ENCODE measurements at regions of chr1 and their contacts with region 1.

Region 1: GRCh38 chr1:40862008-40862863 is at the start of gene CITED4:
- DNase-seq: peak; percentile 95
- H3K4me3 ChIP-seq: peak within 1 kb of the TSS; percentile 57 to 79
- H3K4me3 Mint-ChIP-seq: peak within 1 kb of the TSS; percentile 94 to 99 (median 98)
- H3K27ac ChIP-seq: peak within 1 kb of the TSS; percentile 63
- H3K27ac Mint-ChIP-seq: peak within 1 kb of the TSS; percentile 89 to 99 (median 98)
- H3K4me1 ChIP-seq: peaks cover 14% of the 10 kb centered on the region
- H3K4me1 Mint-ChIP-seq: peaks cover 7 to 15% (median 10%) of the 10 kb centered on the region in 4 donors
- H3K27me3 ChIP-seq: no peaks in the 10 kb centered on the region
- H3K27me3 Mint-ChIP-seq: peaks cover 0 to 4% of the 10 kb centered on the region in 2 donors
- total RNA-seq, gene CITED4: 8.1 to 8.4 TPM

Region 2: DNA sequence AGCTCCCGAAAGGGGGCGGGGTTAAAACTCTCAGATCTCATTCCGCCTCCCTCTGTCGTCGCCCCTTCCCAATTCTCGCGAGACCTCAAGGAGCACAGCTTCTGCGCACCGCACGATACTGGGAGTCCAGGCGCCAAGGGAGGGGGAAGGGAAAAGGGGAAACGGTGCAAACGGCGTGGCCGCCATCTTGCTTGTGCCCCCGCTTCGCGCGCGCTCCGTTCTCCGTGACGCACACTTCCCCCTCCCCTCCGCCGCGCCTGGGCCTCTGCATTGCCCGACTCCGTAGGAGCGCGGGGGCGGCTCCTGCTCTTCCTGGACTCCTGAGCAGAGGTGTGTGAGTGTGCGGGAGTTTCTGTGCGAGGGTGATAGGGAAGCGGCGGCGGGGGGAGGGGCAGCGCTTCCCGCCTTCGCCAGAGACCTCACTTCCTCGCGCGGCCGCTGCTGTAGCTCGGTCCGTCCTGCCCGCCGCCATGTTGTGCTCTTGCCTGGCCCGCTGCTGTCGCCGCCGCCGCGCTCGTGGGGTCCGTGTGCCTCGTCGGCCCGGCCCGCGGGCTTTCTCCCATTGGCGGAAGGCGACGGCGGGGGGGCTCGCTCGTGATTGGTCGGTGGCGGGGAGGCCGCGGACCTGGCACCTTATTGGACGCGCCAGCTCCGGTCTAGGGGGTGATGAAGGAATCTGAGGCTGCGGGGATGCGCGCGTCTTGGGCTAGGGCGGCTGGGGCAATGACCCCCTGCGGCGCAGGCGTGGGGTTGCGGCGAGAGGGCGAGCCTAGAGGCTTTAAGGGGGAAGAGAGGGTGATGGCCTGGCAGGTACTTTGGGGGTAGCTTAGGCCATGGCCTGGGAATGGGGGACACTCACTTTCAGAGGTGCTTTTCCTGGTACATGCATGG is 170.5 kb before region 1 on chr1 and contains the start of gene NFYC:
- CTCF ChIA-PET with region 1: no interaction called
- POLR2A ChIA-PET with region 1: interaction called, 31 read pairs
- intact Hi-C with region 1: no loop called
- DNase-seq: peak; percentile 93 to 97 (median 96)
- H3K4me3 ChIP-seq: peak within 1 kb of the TSS; percentile 74 to 86
- H3K4me3 Mint-ChIP-seq: peak within 1 kb of the TSS; percentile 89 to 97 (median 94)
- H3K27ac ChIP-seq: peak within 1 kb of the TSS; percentile 98
- H3K27ac Mint-ChIP-seq: peak within 1 kb of the TSS; percentile 94 to 98 (median 96)
- H3K4me1 ChIP-seq: peaks cover 60% of the 10 kb centered on the region
- H3K4me1 Mint-ChIP-seq: peaks cover 51 to 69% (median 58%) of the 10 kb centered on the region in 4 donors
- H3K27me3 ChIP-seq: no peaks in the 10 kb centered on the region
- H3K27me3 Mint-ChIP-seq: no peaks in the 10 kb centered on the region
- total RNA-seq, gene NFYC: 70.4 to 73.6 TPM

Region 3: GRCh38 chr1:40802078-40802741 is 60.0 kb before region 1 on chr1:
- CTCF ChIA-PET with region 1: no interaction called
- POLR2A ChIA-PET with region 1: interaction called, 7 read pairs
- intact Hi-C with region 1: loop called (anchors 1 kb)
- DNase-seq: peak; percentile 85 to 88 (median 86)
- H3K4me3 ChIP-seq: peak overlapping the region in 1 of 2 donors; percentile 62
- H3K4me3 Mint-ChIP-seq: peak overlapping the region; percentile 66 to 87 (median 78)
- H3K27ac ChIP-seq: peak overlapping the region; percentile 63
- H3K27ac Mint-ChIP-seq: peak overlapping the region; percentile 22 to 90 (median 86)
- H3K4me1 ChIP-seq: peaks cover 25% of the 10 kb centered on the region
- H3K4me1 Mint-ChIP-seq: peaks cover 16 to 37% (median 28%) of the 10 kb centered on the region in 4 donors
- H3K27me3 ChIP-seq: no peaks in the 10 kb centered on the region
- H3K27me3 Mint-ChIP-seq: no peaks in the 10 kb centered on the region

Region 4: GRCh38 chr1:40849801-40850592 is 12.2 kb before region 1 on chr1:
- CTCF ChIA-PET with region 1: interaction called, 6 read pairs
- POLR2A ChIA-PET with region 1: interaction called, 13 read pairs
- intact Hi-C with region 1: no loop called
- DNase-seq: peak; percentile 67 to 78 (median 73)
- H3K4me3 ChIP-seq: no peak overlapping the region
- H3K4me3 Mint-ChIP-seq: peak overlapping the region in 7 of 8 donors; percentile 17 to 56 (median 45)
- H3K27ac ChIP-seq: no peak overlapping the region
- H3K27ac Mint-ChIP-seq: peak overlapping the region in 5 of 7 donors; percentile 19 to 71 (median 35)
- H3K4me1 ChIP-seq: peaks cover 9% of the 10 kb centered on the region
- H3K4me1 Mint-ChIP-seq: peaks cover 5 to 14% (median 11%) of the 10 kb centered on the region in 4 donors
- H3K27me3 ChIP-seq: no peaks in the 10 kb centered on the region
- H3K27me3 Mint-ChIP-seq: no peaks in the 10 kb centered on the region

Region 5: DNA sequence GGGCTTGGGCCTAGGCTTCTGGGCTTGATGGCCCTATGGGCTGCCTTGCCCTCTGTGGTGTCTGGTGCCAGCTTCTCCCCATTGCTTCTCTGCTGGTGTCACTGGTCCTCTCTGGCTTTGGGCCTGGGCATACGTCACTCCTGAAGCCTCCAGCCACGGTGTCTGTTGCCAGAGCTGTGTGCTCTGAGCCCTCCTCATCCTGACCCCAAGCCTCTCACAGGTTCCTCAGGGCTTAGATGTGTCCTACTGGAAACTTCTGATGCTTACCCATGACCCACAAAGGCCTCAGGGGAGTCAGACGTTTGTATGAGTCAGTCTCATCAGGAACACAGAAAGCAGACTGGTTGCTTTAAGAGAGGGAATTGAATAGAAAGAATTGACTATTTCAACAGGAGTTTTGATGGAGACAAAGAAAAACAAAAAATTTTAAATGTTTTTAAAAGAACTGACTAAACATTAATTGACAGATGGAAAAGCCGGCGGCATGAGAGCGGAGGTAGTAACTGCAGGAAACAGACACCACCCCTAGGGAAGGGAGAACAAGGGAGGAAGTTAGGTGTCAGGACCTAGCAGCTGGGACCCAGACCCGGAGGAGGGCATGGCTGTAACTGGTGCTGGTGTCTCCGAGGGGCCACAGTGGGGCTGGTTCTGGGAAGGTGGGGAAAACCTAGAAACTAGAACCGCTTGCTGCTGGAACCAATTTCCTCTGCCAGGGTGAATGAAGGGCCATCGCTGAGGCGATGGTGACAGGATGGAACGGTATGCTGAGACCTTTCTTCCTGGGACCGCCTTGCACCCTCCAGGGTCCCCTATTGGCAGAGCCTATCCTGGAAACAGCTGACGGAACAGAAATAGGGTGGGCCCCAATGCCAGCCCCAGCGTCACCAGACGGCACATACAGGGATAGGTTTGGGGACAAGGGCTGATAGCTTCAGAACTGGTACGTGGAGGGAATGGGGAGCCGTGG is 39.9 kb after region 1 on chr1:
- CTCF ChIA-PET with region 1: no interaction called
- POLR2A ChIA-PET with region 1: no interaction called
- intact Hi-C with region 1: no loop called
- DNase-seq: no peak
- H3K4me3 ChIP-seq: no peak overlapping the region
- H3K4me3 Mint-ChIP-seq: no peak overlapping the region
- H3K27ac ChIP-seq: no peak overlapping the region
- H3K27ac Mint-ChIP-seq: no peak overlapping the region
- H3K4me1 ChIP-seq: no peaks in the 10 kb centered on the region
- H3K4me1 Mint-ChIP-seq: no peaks in the 10 kb centered on the region
- H3K27me3 ChIP-seq: no peaks in the 10 kb centered on the region
- H3K27me3 Mint-ChIP-seq: peaks cover 2 to 4% of the 10 kb centered on the region in 2 donors

Region 6: DNA sequence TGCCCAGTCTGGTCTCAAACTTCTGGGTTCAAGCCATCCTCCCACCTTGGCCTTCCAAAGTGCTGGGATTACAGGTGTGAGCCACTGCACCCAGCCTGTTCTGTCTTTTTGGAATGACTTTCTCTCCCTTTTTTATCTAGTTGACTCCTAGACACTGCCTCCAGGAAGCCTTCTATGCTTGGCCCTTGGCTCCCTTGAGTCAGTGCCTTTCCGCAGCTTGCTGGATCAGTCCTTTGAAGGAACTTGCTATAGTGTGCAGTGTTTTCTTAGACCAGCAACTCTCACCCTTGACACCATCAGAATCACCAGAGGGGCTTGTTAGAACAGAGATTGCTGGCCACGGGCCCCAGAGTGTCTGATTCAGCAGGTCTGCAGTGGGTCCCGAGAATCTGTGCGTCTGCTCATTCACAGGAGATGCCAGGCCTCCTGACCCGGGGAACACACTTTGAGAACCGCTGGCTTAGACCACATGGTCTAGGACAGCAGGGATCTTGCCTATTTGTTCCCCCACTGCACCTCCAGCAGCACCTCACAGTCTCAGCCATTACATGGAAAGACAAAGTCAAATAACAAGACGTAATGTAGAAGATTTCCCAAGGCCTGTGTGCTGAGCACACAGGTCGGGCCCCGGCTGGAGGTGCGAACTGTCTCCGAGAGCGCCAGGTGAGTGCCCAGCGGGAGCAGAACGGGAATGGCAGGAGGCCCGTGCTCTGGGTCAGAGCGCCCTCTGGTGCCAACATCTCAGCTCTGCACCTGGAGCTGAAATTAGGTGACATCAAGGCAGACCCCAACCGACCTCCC is 89.9 kb after region 1 on chr1:
- CTCF ChIA-PET with region 1: interaction called, 19 read pairs
- POLR2A ChIA-PET with region 1: interaction called, 4 read pairs
- intact Hi-C with region 1: no loop called
- DNase-seq: peak; percentile 43 to 52 (median 47)
- H3K4me3 ChIP-seq: no peak overlapping the region
- H3K4me3 Mint-ChIP-seq: peak overlapping the region in 1 of 8 donors; percentile 39
- H3K27ac ChIP-seq: no peak overlapping the region
- H3K27ac Mint-ChIP-seq: no peak overlapping the region
- H3K4me1 ChIP-seq: no peaks in the 10 kb centered on the region
- H3K4me1 Mint-ChIP-seq: peaks cover 0 to 11% (median 4%) of the 10 kb centered on the region in 4 donors
- H3K27me3 ChIP-seq: peaks cover 5% of the 10 kb centered on the region
- H3K27me3 Mint-ChIP-seq: peaks cover 5 to 18% of the 10 kb centered on the region in 2 donors

Region 7: GRCh38 chr1:41003640-41004220 is 141.5 kb after region 1 on chr1:
- CTCF ChIA-PET with region 1: interaction called, 6 read pairs
- POLR2A ChIA-PET with region 1: interaction called, 8 read pairs
- intact Hi-C with region 1: loop called (anchors 1 kb)
- DNase-seq: peak; percentile 82 to 93 (median 87)
- H3K4me3 ChIP-seq: no peak overlapping the region
- H3K4me3 Mint-ChIP-seq: peak overlapping the region in 4 of 8 donors; percentile 1 to 48 (median 18)
- H3K27ac ChIP-seq: no peak overlapping the region
- H3K27ac Mint-ChIP-seq: peak overlapping the region; percentile 11 to 86 (median 77)
- H3K4me1 ChIP-seq: peaks cover 17% of the 10 kb centered on the region
- H3K4me1 Mint-ChIP-seq: peaks cover 11 to 28% (median 20%) of the 10 kb centered on the region in 4 donors
- H3K27me3 ChIP-seq: no peaks in the 10 kb centered on the region
- H3K27me3 Mint-ChIP-seq: no peaks in the 10 kb centered on the region

Measured in CD4-positive, alpha-beta memory T cell (primary cell).